Activated CD8-positive, alpha-beta T cell treated with anti-CD3 and anti-CD28 coated beads for 36 hours (primary cell): ENCODE measurements at regions of chr11 and their contacts with region 1.

Region 1: GRCh38 chr11:118565051-118565450 is 680 bp downstream of the IFT46 start:
- DNase-seq: no peak
- ATAC-seq: no peak
- H3K4me3 Mint-ChIP-seq: peak overlapping the region; percentile 88
- H3K27ac Mint-ChIP-seq: peak overlapping the region; percentile 43
- H3K4me1 Mint-ChIP-seq: peaks cover 21% of the 10 kb centered on the region
- H3K27me3 Mint-ChIP-seq: no peaks in the 10 kb centered on the region
- CTCF ChIP-seq: no peak

Region 2: DNA sequence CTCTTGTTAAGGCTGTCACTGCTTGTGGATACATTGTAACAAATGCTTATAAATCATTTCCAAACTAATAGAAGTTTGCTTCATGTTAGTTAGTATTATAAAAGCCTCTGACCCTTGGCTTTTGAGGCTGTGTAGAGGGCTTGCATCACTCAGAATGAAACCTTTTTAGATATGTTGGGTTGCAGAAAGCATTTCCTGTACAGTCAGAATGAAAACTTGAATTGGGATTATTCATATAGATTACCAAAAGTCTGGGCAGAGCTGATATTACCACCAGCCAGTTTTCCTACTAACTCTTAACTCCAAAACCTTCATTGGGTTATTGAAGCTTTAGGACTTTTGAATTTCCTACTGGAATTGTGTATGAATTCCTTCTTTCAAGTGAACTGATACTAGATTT is 116.8 kb before region 1 on chr11:
- CTCF ChIA-PET with region 1: no interaction called
- POLR2A ChIA-PET with region 1: no interaction called
- intact Hi-C with region 1: loop called (anchors 10 kb)
- DNase-seq: peak; percentile 40
- ATAC-seq: peak; percentile 78
- H3K4me3 Mint-ChIP-seq: no peak overlapping the region
- H3K27ac Mint-ChIP-seq: peak overlapping the region; percentile 59
- H3K4me1 Mint-ChIP-seq: peaks cover 72% of the 10 kb centered on the region
- H3K27me3 Mint-ChIP-seq: no peaks in the 10 kb centered on the region
- CTCF ChIP-seq: no peak

Region 3: DNA sequence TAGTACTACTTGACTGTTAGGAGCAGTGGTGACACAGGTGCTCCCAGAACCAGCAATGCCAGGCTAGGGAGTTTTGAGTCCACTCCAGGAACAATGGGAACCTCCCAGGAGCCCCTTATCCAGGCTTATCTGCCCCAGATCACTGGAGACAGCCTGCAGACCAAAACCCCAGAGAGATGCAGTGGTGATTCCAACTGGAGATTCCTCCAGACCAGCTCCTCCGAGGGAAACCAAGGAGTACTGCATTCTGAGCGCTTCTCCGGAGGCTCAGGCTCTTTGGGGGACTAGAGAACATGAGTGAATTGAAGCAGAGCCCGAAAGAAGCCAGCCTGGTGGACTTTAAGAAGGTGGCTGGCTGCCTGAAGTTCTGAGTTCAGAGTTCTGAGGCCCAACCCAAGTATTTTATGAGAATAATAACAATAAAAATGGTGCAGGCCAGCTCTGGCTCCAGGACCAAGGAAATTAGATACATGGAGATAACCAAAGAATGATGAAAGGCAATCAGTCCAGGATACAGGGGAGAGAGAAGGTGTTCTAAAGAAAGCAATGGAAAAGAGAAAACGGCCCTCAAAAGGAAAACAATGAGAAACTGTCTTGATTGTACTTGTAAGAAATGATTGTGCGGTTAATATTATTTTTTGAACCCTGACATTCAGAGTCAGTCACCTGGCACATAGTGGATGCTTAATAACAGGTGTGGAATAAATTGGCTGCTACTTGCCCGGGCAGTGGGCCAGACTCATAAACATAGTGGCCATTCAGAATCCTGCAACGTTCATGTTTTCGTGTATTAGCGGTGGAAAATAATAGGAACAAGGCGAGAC is 35.3 kb before region 1 on chr11:
- CTCF ChIA-PET with region 1: no interaction called
- POLR2A ChIA-PET with region 1: interaction called, 4 read pairs
- intact Hi-C with region 1: loop called (anchors 5 kb)
- DNase-seq: no peak
- ATAC-seq: no peak
- H3K4me3 Mint-ChIP-seq: peak overlapping the region; percentile 96
- H3K27ac Mint-ChIP-seq: peak overlapping the region; percentile 66
- H3K4me1 Mint-ChIP-seq: peaks cover 28% of the 10 kb centered on the region
- H3K27me3 Mint-ChIP-seq: no peaks in the 10 kb centered on the region
- CTCF ChIP-seq: no peak